GM18951 (cell line): ENCODE measurements at regions of chr2 and their contacts with region 1.

Region 1: DNA sequence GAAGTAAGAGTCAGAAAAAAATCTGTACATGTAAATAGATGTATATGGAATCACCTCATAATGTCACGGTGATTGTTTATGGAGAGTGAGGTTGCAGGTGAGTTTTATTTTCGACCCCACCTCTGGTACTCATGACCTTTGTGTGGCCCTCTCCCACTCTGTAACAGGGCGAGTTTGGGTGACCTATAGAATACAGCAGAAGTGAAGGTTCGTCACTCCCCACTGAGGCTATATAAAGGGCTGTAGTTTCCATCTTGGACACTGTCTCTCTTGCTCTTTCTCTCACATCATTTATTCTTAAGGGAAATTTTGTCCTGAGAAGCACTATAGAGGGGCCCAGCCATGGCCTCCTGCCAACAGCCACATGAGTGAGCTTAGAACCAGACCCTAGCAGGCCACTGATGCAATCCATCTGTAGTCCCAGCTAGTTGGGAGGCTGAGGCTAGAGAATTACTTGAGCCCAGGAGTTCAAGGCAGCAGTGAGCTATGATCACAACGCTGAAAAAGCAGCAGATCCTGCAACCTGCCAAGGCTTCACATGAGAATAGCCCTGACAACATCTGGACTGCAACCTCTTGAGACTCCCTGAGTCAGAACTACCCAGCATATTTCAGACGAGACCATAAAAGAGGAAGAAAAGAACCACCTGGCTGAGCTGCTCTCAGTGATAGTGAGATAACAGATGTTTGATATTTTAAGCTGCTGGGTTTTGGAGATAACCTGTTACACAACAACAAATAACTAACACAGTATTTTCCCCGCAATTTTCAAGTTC is 74.3 kb upstream of the SLC1A4 start:
- POLR2A ChIP-seq: no peak

Region 2: DNA sequence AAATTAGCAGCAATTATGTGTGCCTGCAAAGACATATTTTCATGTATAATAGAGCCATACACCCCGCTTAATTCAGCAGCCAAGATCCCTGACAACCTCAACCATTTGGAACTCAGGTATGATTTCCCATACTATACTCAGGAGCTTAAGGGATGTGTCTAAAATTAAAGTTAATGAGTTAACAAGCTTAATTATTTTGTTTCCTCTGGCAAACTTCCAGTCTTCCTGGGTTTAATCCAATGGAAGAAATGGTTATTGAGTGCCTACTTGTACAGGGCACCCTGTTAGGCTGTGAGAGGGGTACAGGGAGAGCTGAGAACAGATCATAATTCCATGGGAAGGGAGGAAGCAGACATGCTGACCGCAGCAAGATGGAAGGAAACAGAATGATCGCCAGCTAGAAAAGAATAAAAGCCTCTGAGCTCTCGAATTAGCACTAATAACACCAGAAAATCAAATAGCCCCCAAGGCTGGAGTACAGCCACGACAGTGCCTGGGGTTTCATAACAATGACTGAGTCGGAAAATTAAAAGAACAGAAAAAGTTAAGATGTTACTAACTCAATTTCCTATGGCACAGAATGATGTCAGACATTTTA is 120.5 kb after region 1 on chr2:
- in situ Hi-C with region 1: loop called (anchors 5 kb)
- POLR2A ChIP-seq: no peak

Region 3: DNA sequence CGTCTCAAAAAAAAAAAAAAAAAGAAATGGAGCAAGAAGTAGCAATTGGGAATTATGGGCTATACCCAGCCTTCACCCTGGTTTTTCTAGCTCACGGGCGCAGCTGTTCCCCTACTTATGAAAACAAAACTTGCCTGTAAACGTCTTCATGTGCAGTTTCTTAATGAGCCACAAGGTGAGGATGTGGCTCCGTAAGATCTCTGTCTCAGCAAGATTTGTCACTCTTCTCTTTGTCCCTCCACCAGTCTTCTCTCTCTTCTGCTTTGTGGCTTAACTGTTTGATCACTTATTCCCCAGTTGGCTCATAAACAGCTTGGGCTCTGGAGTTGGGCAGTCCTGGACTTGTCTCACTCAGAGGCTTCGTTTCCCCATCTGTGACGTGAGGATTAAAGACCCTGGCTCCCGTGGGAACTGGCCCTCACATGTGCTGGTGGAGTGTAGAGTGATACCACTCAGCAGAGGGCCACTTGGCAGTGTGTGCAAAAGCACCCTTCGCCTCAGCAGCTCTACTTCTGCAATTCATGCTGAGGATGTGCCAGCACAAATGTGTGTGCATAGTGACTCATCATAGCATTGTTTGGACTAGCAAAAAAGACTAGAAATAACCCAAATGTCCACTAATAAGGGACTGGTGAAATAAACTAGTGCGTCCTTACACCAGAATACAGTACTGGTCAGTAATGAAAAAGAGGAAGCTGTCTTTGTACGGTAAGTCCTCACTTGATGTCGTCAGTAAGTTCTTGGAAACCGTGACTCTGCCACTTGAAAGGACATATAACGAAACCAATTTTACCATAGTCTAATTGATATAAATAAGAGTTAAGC is 150.0 kb after region 1 on chr2:
- in situ Hi-C with region 1: no loop called
- POLR2A ChIP-seq: no peak

Region 4: DNA sequence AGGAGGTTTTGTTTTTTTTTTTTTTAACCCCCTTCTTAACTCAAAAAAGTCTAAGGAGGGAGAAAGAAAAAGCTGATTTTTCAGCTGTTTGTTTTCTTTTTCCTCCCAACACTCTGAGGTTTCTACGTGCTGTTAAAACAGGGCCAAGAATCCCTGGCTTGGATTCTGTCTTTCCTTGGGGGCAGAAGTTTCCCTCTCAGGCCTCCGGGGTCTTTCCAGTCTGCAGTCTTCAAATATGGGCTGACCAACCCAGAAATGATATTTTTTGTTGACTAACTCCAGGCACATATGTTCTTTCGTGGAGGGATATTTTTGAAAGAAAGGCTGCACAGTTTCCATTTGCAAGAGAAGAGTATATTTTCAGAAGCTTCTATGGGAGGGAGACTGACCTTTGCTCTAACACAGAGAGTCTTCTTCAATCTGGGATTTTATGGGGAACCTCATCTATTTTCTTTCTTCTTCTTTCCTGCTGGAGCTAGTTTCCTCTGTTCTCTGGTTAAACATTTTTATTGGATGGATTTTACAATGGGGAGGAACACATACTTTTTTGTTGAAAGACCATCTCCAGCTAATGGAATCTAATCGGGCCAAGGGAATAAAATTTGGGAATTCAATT is 610.8 kb after region 1 on chr2:
- in situ Hi-C with region 1: no loop called
- POLR2A ChIP-seq: no peak